Naive thymus-derived CD8-positive, alpha-beta T cell (primary cell): ENCODE measurements at regions of chr6 and their contacts with region 1.

Region 1: DNA sequence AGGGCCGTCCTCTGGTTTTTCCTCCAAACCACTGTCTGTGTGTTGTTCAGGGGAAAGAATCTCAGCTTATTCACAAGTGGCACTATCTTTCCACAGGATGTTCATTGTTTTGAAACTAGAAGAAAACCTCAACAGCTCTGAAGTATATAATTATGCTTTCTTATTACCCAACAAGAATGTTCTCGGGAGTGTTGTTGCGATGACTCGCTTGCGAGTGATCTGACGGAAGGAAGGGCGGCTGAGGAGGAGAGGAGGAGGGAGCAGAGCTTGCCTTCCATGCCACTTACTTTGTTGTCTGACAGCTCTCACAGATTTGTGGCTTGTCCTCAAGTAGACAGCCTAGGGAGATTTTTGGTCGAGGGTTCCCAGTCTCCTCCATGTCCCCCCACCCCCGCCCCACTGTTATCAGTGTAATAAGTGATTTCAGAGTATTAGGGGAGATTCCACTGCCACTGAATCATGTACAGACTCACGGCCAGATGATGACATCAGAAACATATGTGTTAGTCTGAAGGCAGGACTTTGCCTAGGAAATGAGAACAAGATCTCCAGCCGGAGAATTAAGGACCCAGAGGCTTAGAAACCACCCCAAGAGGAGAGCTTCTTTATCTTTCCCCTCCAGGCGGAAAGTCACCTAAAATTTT is 80.7 kb upstream of the CCN6 start:
- DNase-seq: peak; percentile 40 to 87 (median 74)
- ATAC-seq: peak; percentile 91
- H3K4me3 Mint-ChIP-seq: peak overlapping the region; percentile 56 to 81 (median 66)
- H3K27ac Mint-ChIP-seq: peak overlapping the region; percentile 94 to 99 (median 98)
- H3K4me1 Mint-ChIP-seq: peaks cover 28 to 77% (median 73%) of the 10 kb centered on the region in 4 donors
- H3K27me3 Mint-ChIP-seq: peaks cover 0 to 1% (median 0%) of the 10 kb centered on the region in 5 donors

Region 2: GRCh38 chr6:111763381-111763780 is 209.9 kb before region 1 on chr6:
- POLR2A ChIA-PET with region 1: no interaction called
- DNase-seq: no peak
- ATAC-seq: no peak
- H3K4me3 Mint-ChIP-seq: peak overlapping the region in 4 of 10 donors; percentile 64 to 90 (median 68)
- H3K27ac Mint-ChIP-seq: peak overlapping the region; percentile 78 to 100 (median 98)
- H3K4me1 Mint-ChIP-seq: peaks cover 73 to 100% (median 99%) of the 10 kb centered on the region in 4 donors
- H3K27me3 Mint-ChIP-seq: no peaks in the 10 kb centered on the region

Region 3: GRCh38 chr6:111873178-111874024 is 99.8 kb before region 1 on chr6 and contains the start of gene FYN:
- POLR2A ChIA-PET with region 1: interaction called, 22 read pairs
- DNase-seq: peak; percentile 94 to 99 (median 98)
- ATAC-seq: peak; percentile 82 to 86
- H3K4me3 Mint-ChIP-seq: peak within 1 kb of the TSS; percentile 86 to 100 (median 100)
- H3K27ac Mint-ChIP-seq: peak within 1 kb of the TSS; percentile 89 to 100 (median 97)
- H3K4me1 Mint-ChIP-seq: peaks cover 31 to 56% (median 41%) of the 10 kb centered on the region in 4 donors
- H3K27me3 Mint-ChIP-seq: no peaks in the 10 kb centered on the region
- polyA plus RNA-seq, gene FYN: 159 to 317 (median 317) TPM

Region 4: DNA sequence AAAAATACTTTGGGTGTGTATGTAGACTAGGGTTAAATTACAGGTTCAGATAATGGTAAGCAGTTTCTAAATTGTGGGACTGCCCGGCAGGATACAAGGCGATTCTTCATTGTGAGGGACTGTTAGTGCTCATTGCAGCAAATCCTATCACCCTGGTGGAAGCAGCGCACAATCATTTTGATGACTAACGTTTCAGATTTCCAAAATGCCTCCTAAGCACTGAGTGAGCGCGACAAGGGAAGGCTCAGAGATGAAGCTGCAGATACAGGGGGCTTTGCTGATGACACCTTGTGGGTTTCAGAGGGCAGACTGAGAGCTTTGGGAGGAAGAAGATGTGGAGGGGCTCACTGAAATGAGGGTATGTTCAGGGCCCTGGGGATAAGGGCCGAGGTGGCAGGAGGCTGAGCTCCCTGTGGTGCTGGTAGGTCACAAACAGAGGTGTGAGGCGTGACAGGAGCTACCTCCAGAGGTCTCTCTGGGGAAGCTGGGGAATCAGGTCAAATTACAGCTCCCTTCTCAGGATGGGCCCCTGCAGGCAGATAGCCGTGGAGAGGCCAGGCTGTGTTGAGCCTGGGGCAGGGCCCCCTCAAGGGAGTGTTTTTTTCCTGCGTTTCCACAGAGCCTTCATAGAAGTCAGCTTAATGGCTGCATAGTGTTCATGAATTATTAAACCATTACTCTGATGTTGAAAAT is 15.5 kb before region 1 on chr6:
- POLR2A ChIA-PET with region 1: interaction called, 10 read pairs
- DNase-seq: no peak
- ATAC-seq: no peak
- H3K4me3 Mint-ChIP-seq: no peak overlapping the region
- H3K27ac Mint-ChIP-seq: no peak overlapping the region
- H3K4me1 Mint-ChIP-seq: peaks cover 0 to 11% (median 2%) of the 10 kb centered on the region in 4 donors
- H3K27me3 Mint-ChIP-seq: no peaks in the 10 kb centered on the region

Region 5: DNA sequence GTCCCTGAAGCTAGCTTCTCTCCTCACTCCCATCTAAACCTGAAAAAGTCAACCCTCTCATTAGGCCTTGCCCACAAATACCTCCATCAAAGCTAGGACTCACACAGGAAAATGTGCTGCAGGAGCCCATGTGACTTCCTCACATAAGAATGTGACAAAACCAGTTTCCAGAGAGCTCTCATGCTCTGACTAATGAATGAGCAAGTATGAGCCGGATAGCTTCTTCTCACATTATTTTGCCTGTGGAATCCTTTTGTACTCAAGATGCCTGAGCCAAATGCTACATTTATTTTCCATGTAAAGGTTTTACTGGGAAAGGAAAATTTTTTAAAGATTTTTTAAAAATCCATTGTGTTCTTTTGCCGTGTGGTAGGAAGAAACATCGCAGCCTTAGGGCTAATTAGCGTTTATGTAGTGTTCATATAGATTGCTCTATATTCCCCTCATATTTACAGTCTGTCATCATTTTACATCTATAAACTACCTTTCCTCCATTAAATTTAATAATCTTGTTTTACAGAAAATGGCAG is 12.0 kb after region 1 on chr6:
- POLR2A ChIA-PET with region 1: interaction called, 55 read pairs
- DNase-seq: peak in 1 of 10 donors; percentile 28
- ATAC-seq: peak; percentile 22 to 38
- H3K4me3 Mint-ChIP-seq: peak overlapping the region in 8 of 10 donors; percentile 3 to 63 (median 34)
- H3K27ac Mint-ChIP-seq: peak overlapping the region in 8 of 10 donors; percentile 41 to 96 (median 74)
- H3K4me1 Mint-ChIP-seq: peaks cover 44 to 89% (median 83%) of the 10 kb centered on the region in 4 donors
- H3K27me3 Mint-ChIP-seq: no peaks in the 10 kb centered on the region

Region 6: DNA sequence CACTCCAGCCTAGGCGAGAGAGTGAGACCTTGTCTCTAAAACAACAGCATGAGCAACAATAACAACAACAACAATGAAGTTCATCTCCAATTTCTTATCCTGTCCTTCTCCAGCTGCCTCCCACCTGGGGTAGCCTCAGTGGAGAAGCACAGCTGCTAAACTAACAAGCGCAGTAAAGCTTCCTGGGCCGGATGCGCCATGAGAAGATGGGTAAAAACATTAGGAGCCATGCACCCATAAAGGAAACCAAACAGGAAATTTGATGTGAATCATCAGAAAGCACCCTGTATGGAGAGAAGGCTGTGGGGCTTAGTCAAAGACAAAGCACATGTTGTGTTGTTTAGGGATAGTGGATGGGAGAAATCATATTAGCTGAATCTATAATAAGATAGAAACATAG is 19.6 kb after region 1 on chr6:
- POLR2A ChIA-PET with region 1: interaction called, 55 read pairs
- DNase-seq: peak in 5 of 10 donors; percentile 31 to 45 (median 32)
- ATAC-seq: peak; percentile 26 to 53
- H3K4me3 Mint-ChIP-seq: peak overlapping the region in 9 of 10 donors; percentile 9 to 80 (median 54)
- H3K27ac Mint-ChIP-seq: peak overlapping the region; percentile 79 to 96 (median 91)
- H3K4me1 Mint-ChIP-seq: peaks cover 60 to 92% (median 88%) of the 10 kb centered on the region in 4 donors
- H3K27me3 Mint-ChIP-seq: no peaks in the 10 kb centered on the region